ENCODE measurements at regions of chr14 and their contacts with region 1.

Region 1: GRCh38 chr14:60622917-60623257 is 26.4 kb downstream of the SIX1 start:
- DNase-seq: no peak
- H3K4me3 ChIP-seq: no peak overlapping the region
- H3K4me3 Mint-ChIP-seq: no peak overlapping the region
- H3K27ac ChIP-seq: no peak overlapping the region
- H3K27ac Mint-ChIP-seq: no peak overlapping the region
- H3K4me1 ChIP-seq: no peaks in the 10 kb centered on the region
- H3K4me1 Mint-ChIP-seq: no peaks in the 10 kb centered on the region
- H3K27me3 ChIP-seq: no peaks in the 10 kb centered on the region
- H3K27me3 Mint-ChIP-seq: peaks cover 2 to 20% of the 10 kb centered on the region in 2 donors

Region 2: DNA sequence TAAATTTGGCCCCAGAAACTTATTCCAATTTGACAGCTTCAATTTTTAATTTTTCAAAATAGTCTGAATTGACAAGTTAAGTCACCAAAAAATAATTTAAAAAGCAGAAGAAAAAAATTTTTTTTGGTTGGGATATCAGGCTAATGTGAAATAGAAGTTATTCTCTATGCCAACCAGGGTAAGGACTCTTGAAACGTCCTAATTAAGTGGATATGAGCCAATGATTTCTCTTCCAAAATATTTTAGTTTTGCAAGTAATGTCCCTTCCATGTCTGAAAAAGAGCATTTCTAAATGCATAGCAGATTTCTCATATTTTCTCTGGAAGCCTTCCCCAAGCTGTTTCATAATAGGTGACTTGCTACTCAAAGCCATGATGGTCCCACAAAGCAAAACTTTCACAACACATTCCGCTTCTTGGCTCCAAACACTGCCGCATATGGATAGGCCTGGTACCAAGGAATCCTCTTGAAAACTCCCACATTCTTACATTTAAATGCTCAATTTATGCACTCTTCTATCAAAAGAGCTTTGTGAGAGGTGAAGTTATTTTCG is 48.9 kb before region 1 on chr14:
- CTCF ChIA-PET with region 1: no interaction called
- POLR2A ChIA-PET with region 1: no interaction called
- intact Hi-C with region 1: no loop called
- DNase-seq: no peak
- H3K4me3 ChIP-seq: no peak overlapping the region
- H3K4me3 Mint-ChIP-seq: no peak overlapping the region
- H3K27ac ChIP-seq: no peak overlapping the region
- H3K27ac Mint-ChIP-seq: no peak overlapping the region
- H3K4me1 ChIP-seq: no peaks in the 10 kb centered on the region
- H3K4me1 Mint-ChIP-seq: peaks cover 0 to 3% (median 0%) of the 10 kb centered on the region in 4 donors
- H3K27me3 ChIP-seq: no peaks in the 10 kb centered on the region
- H3K27me3 Mint-ChIP-seq: peaks cover 11 to 16% of the 10 kb centered on the region in 2 donors

Region 3: GRCh38 chr14:60639674-60640073 is 16.8 kb after region 1 on chr14:
- CTCF ChIA-PET with region 1: interaction called, 11 read pairs
- POLR2A ChIA-PET with region 1: no interaction called
- intact Hi-C with region 1: no loop called
- DNase-seq: no peak
- H3K4me3 ChIP-seq: no peak overlapping the region
- H3K4me3 Mint-ChIP-seq: no peak overlapping the region
- H3K27ac ChIP-seq: no peak overlapping the region
- H3K27ac Mint-ChIP-seq: no peak overlapping the region
- H3K4me1 ChIP-seq: peaks cover 26% of the 10 kb centered on the region
- H3K4me1 Mint-ChIP-seq: peaks cover 10 to 37% (median 24%) of the 10 kb centered on the region in 4 donors
- H3K27me3 ChIP-seq: peaks cover 70% of the 10 kb centered on the region
- H3K27me3 Mint-ChIP-seq: peaks cover 62 to 66% of the 10 kb centered on the region in 2 donors

Region 4: DNA sequence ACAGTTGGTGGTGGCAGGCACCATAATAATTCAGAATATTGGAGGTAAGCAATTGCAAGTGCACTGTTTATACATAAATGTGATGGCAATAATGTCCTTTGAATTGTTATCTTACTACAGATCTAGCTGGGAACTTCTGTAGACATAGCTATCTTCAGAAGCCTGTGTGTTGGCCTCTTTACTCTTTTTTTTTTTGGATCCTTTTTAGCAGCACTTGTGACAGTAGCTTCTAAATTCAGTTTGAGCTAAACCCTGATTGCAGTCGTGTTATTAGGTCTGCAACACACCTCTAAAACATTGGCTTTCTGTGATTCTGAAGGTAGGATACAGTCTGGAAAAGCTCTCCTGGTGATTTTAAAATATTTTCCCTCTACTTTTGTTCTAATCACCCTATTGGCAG is 396.6 kb after region 1 on chr14:
- CTCF ChIA-PET with region 1: interaction called, 59 read pairs
- POLR2A ChIA-PET with region 1: no interaction called
- intact Hi-C with region 1: no loop called
- DNase-seq: no peak
- H3K4me3 ChIP-seq: no peak overlapping the region
- H3K4me3 Mint-ChIP-seq: no peak overlapping the region
- H3K27ac ChIP-seq: no peak overlapping the region
- H3K27ac Mint-ChIP-seq: no peak overlapping the region
- H3K4me1 ChIP-seq: no peaks in the 10 kb centered on the region
- H3K4me1 Mint-ChIP-seq: no peaks in the 10 kb centered on the region
- H3K27me3 ChIP-seq: no peaks in the 10 kb centered on the region
- H3K27me3 Mint-ChIP-seq: no peaks in the 10 kb centered on the region

Region 5: GRCh38 chr14:61025251-61026223 is 402.6 kb after region 1 on chr14:
- CTCF ChIA-PET with region 1: interaction called, 59 read pairs
- POLR2A ChIA-PET with region 1: no interaction called
- intact Hi-C with region 1: loop called (anchors 1 kb)
- DNase-seq: peak; percentile 38 to 49 (median 47)
- H3K4me3 ChIP-seq: no peak overlapping the region
- H3K4me3 Mint-ChIP-seq: no peak overlapping the region
- H3K27ac ChIP-seq: no peak overlapping the region
- H3K27ac Mint-ChIP-seq: no peak overlapping the region
- H3K4me1 ChIP-seq: no peaks in the 10 kb centered on the region
- H3K4me1 Mint-ChIP-seq: peaks cover 0 to under 1% (median 0%) of the 10 kb centered on the region in 4 donors
- H3K27me3 ChIP-seq: no peaks in the 10 kb centered on the region
- H3K27me3 Mint-ChIP-seq: no peaks in the 10 kb centered on the region

Region 6: GRCh38 chr14:61031026-61031425 is 408.1 kb after region 1 on chr14:
- CTCF ChIA-PET with region 1: interaction called, 59 read pairs
- POLR2A ChIA-PET with region 1: no interaction called
- intact Hi-C with region 1: no loop called
- DNase-seq: no peak
- H3K4me3 ChIP-seq: no peak overlapping the region
- H3K4me3 Mint-ChIP-seq: no peak overlapping the region
- H3K27ac ChIP-seq: no peak overlapping the region
- H3K27ac Mint-ChIP-seq: no peak overlapping the region
- H3K4me1 ChIP-seq: no peaks in the 10 kb centered on the region
- H3K4me1 Mint-ChIP-seq: peaks cover 0 to 5% (median 4%) of the 10 kb centered on the region in 4 donors
- H3K27me3 ChIP-seq: no peaks in the 10 kb centered on the region
- H3K27me3 Mint-ChIP-seq: no peaks in the 10 kb centered on the region

Region 7: GRCh38 chr14:61252369-61253063 is 629.6 kb after region 1 on chr14:
- CTCF ChIA-PET with region 1: interaction called, 27 read pairs
- POLR2A ChIA-PET with region 1: no interaction called
- intact Hi-C with region 1: loop called (anchors 1 kb)
- DNase-seq: peak; percentile 49 to 69 (median 61)
- H3K4me3 ChIP-seq: no peak overlapping the region
- H3K4me3 Mint-ChIP-seq: no peak overlapping the region
- H3K27ac ChIP-seq: no peak overlapping the region
- H3K27ac Mint-ChIP-seq: peak overlapping the region in 1 of 7 donors; percentile 12
- H3K4me1 ChIP-seq: no peaks in the 10 kb centered on the region
- H3K4me1 Mint-ChIP-seq: peaks cover 0 to 3% (median under 1%) of the 10 kb centered on the region in 4 donors
- H3K27me3 ChIP-seq: peaks cover 3% of the 10 kb centered on the region
- H3K27me3 Mint-ChIP-seq: peaks cover 1 to 5% of the 10 kb centered on the region in 2 donors

Region 8: GRCh38 chr14:62126879-62127478 is 1504.1 kb after region 1 on chr14:
- CTCF ChIA-PET with region 1: no interaction called
- POLR2A ChIA-PET with region 1: no interaction called
- intact Hi-C with region 1: loop called (anchors 10 kb)
- DNase-seq: peak in 4 of 5 donors; percentile 16 to 34 (median 30)
- H3K4me3 ChIP-seq: no peak overlapping the region
- H3K4me3 Mint-ChIP-seq: no peak overlapping the region
- H3K27ac ChIP-seq: no peak overlapping the region
- H3K27ac Mint-ChIP-seq: no peak overlapping the region
- H3K4me1 ChIP-seq: no peaks in the 10 kb centered on the region
- H3K4me1 Mint-ChIP-seq: no peaks in the 10 kb centered on the region
- H3K27me3 ChIP-seq: peaks cover 7% of the 10 kb centered on the region
- H3K27me3 Mint-ChIP-seq: peaks cover 21 to 22% of the 10 kb centered on the region in 2 donors

Measured in CD4-positive, alpha-beta memory T cell (primary cell).